PC-9 (cell line): ENCODE measurements at regions of chr7 and their contacts with region 1.

Region 1: GRCh38 chr7:116258734-116259133 is 48.4 kb downstream of the TES start:
- DNase-seq: peak; percentile 52 to 58
- H3K4me3 ChIP-seq: no peak overlapping the region
- H3K27ac ChIP-seq: peak overlapping the region; percentile 30; the same call in 1 of the 2 replicates
- H3K4me1 ChIP-seq: peaks cover 18% of the 10 kb centered on the region
- H3K27me3 ChIP-seq: no peaks in the 10 kb centered on the region
- CTCF ChIP-seq: peak; percentile 93

Region 2: DNA sequence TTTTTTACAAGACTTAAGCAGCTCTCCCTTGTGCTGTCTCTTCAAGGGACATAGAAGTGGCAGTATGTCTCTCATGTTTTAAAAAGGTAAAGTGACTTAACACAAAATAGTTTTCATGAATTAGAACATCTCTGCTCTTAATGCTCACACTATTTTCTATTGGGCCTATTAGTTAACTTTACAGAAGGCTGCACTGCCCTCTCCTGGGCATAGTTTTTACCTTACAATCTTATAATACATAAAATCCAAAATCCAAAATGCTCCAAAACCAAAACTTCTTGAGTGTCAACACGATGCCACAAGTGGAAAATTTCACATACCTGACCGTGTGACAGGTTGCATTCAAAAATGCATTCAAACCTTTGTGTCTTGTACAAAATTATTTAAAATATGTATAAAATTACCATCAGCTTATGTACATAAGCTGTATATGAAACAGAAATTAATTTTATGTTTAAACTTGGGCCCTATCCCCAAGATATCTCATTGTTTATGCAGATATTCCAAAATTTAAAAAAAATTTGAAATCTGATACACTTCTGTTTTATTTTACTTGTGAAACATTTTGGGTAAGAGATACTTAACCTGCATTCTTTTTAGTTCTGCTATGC is 22.6 kb before region 1 on chr7:
- CTCF ChIA-PET with region 1: no interaction called
- POLR2A ChIA-PET with region 1: no interaction called
- intact Hi-C with region 1: no loop called
- DNase-seq: no peak
- H3K4me3 ChIP-seq: no peak overlapping the region
- H3K27ac ChIP-seq: 0 out of 2 replicates have a peak overlapping the region, but pooled peaks have one; percentile 23
- H3K4me1 ChIP-seq: peaks cover 24% of the 10 kb centered on the region
- H3K27me3 ChIP-seq: no peaks in the 10 kb centered on the region
- CTCF ChIP-seq: peak; percentile 76

Region 3: DNA sequence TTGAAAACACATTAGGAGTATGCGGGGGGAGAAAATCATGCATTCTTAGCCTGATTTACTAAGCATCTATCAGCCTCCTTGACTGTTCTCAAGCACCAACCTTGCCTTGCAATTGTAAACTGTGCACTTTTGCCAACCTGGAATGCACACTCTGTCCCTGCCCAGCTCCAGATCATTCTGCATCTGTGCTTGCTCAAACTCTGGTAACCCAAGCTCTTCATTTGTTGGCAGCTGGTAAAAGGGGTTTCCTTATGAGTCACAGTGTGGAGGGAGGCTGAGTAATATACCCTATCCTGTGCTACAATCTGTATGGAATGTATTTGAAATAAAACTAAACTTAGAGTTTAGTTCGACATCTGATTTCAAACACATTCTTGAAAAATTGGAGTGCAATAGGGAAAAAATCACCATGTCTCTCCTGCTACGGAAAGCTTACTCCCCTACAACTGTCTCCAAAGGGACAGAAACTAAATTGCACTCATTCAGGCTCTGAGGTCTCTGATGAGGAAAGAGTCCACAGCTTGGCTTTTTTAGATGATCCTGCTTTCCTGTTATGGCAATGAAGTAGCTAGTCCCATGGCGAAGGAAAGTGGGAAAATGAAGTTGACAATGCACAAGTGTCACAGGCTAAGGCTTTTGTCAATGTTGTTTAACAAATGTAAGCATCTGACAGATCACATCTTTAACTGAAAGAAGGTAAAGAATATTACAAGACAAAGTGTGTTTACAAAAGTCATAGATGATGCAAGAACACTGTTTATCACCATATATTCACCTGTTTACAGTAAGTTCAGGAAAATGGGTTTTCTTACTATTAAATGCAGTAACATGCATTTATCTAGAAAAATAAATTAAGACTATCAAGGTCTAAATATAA is 13.5 kb after region 1 on chr7:
- CTCF ChIA-PET with region 1: no interaction called
- POLR2A ChIA-PET with region 1: interaction called, 17 read pairs
- intact Hi-C with region 1: loop called (anchors 1 kb)
- DNase-seq: peak; percentile 80 to 95
- H3K4me3 ChIP-seq: peak overlapping the region; percentile 32; the same call in 1 of the 2 replicates
- H3K27ac ChIP-seq: peak overlapping the region; percentile 93
- H3K4me1 ChIP-seq: peaks cover 49% of the 10 kb centered on the region
- H3K27me3 ChIP-seq: no peaks in the 10 kb centered on the region
- CTCF ChIP-seq: no peak

Region 4: GRCh38 chr7:116354546-116355408 is 96.0 kb after region 1 on chr7:
- CTCF ChIA-PET with region 1: interaction called, 5 read pairs
- POLR2A ChIA-PET with region 1: no interaction called
- intact Hi-C with region 1: loop called (anchors 1 kb)
- DNase-seq: peak; percentile 92 to 100
- H3K4me3 ChIP-seq: peak overlapping the region; percentile 50; the same call in 1 of the 2 replicates
- H3K27ac ChIP-seq: peak overlapping the region; percentile 93
- H3K4me1 ChIP-seq: peaks cover 62% of the 10 kb centered on the region
- H3K27me3 ChIP-seq: no peaks in the 10 kb centered on the region
- CTCF ChIP-seq: no peak

Region 5: DNA sequence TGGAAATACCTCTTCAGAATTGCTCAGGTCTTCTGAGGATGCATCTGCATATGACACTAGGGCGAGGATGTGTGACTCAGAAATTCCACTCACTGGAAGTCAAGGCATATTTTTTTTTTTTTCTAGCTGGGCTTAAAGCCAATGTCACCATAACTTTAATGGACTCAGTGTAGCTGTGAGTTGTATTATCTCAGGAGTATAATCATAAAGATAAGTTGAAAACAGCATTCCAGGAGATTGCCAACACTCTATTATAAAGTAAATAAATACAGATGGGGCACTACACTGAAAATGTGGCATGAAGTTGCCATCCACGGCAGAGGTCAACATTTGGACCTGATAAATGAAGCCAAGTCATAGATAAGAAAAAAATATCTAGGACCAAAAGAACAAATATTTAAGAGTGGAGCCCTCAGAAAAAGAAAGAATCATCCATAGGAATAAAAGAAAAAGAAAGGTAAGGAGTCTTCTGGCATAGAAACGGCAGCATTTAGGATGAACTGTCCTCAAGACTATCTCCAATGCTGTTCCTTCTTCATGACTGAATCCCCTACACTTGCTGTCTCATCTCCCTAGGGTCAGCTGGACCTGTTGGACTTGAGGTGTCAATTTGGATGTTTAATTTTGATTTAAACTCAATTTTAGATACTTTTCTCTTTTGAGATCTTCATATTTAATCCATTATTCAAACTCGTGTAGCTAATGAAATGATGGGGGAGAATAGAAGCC is 167.9 kb after region 1 on chr7:
- CTCF ChIA-PET with region 1: no interaction called
- POLR2A ChIA-PET with region 1: no interaction called
- intact Hi-C with region 1: loop called (anchors 1 kb)
- DNase-seq: peak; percentile 56 to 91
- H3K4me3 ChIP-seq: no peak overlapping the region
- H3K27ac ChIP-seq: peak overlapping the region; percentile 59
- H3K4me1 ChIP-seq: peaks cover 26% of the 10 kb centered on the region
- H3K27me3 ChIP-seq: no peaks in the 10 kb centered on the region
- CTCF ChIP-seq: no peak

Region 6: GRCh38 chr7:116492654-116493109 is 233.9 kb after region 1 on chr7:
- CTCF ChIA-PET with region 1: interaction called, 10 read pairs
- POLR2A ChIA-PET with region 1: interaction called, 3 read pairs
- intact Hi-C with region 1: no loop called
- DNase-seq: no peak
- H3K4me3 ChIP-seq: no peak overlapping the region; the same call in 1 of the 2 replicates
- H3K27ac ChIP-seq: no peak overlapping the region
- H3K4me1 ChIP-seq: peaks cover 14% of the 10 kb centered on the region
- H3K27me3 ChIP-seq: no peaks in the 10 kb centered on the region
- CTCF ChIP-seq: no peak

Region 7: DNA sequence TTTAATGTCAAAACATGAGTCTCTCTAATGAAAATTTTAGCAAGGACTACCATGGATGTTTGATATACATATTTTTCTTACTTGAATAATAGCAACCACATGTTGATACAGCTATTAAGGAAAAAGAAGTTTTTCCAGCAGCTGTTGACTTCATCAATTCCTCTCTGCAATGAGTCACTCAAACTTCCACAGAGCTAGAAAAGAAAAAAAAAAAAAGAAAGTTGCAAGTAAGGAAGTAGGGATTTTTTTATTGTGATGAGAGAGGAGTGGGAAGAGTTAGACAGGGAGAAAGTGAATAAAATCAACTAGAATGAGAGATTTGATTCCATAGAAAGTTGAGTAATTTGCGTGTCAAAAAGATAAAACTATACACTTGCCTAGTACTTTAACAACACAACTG is 312.3 kb after region 1 on chr7:
- CTCF ChIA-PET with region 1: interaction called, 3 read pairs
- POLR2A ChIA-PET with region 1: interaction called, 26 read pairs
- intact Hi-C with region 1: no loop called
- DNase-seq: peak in 1 of 2 experiments; percentile 66
- H3K4me3 ChIP-seq: no peak overlapping the region
- H3K27ac ChIP-seq: peak overlapping the region; percentile 45
- H3K4me1 ChIP-seq: peaks cover 23% of the 10 kb centered on the region
- H3K27me3 ChIP-seq: no peaks in the 10 kb centered on the region
- CTCF ChIP-seq: no peak

Region 8: GRCh38 chr7:116692401-116693308 is 433.9 kb after region 1 on chr7:
- CTCF ChIA-PET with region 1: no interaction called
- POLR2A ChIA-PET with region 1: interaction called, 22 read pairs
- intact Hi-C with region 1: no loop called
- DNase-seq: peak in 1 of 2 experiments; percentile 89
- H3K4me3 ChIP-seq: peak overlapping the region; percentile 36; the same call in 1 of the 2 replicates
- H3K27ac ChIP-seq: peak overlapping the region; percentile 89
- H3K4me1 ChIP-seq: peaks cover 46% of the 10 kb centered on the region
- H3K27me3 ChIP-seq: no peaks in the 10 kb centered on the region
- CTCF ChIP-seq: no peak